SK-N-SH (cell line): ENCODE measurements at regions of chr19 and their contacts with region 1.

Region 1: GRCh38 chr19:21474671-21475181 is 30.7 kb upstream of the ZNF429 start:
- DNase-seq: peak; percentile 90
- H3K4me3 ChIP-seq: peak overlapping the region; percentile 41; a peak in 3 of 4 replicates
- H3K27ac ChIP-seq: no peak overlapping the region
- H3K4me1 ChIP-seq: no peaks in the 10 kb centered on the region
- H3K27me3 ChIP-seq: no peaks in the 10 kb centered on the region
- CTCF ChIP-seq: no peak
- EP300 ChIP-seq: no peak
- RAD21 ChIP-seq: no peak

Region 2: DNA sequence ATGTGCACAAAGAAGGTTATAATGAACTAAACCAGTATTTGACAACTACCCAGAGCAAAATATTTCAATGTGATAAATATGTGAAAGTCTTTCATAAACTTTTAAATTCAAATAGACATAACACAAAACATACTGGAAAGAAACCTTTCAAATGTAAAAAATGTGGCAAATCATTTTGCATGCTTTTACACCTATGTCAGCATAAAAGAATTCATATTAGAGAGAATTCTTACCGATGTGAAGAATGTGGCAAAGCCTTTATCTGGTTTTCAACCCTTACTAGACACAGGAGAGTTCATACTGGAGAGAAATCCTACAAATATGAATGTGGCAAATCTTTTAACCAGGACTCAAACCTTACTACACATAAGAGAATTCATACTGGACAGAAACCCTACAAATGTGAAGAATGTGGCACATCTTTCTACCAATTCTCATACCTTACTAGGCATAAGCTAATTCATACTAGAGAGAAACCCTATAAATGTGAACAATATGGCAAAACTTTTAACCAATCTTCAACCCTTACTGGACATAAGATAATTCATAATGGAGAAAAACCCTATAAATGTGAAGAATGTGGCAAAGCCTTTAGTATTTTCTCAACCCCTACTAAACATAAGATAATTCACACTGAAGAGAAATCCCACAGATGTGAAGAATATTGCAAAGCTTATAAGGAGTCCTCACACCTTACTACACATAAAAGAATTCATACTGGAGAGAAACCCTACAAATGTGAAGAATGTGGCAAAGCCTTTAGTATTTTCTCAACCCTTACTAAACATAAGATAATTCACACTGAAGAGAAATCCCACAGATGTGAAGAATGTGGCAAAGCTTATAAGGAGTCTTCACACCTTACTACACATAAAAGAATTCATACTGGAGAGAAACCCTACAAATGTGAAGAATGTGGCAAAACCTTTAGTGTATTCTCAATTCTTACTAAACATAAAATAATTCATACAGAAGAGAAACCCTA is 51.4 kb before region 1 on chr19:
- CTCF ChIA-PET with region 1: no interaction called
- POLR2A ChIA-PET with region 1: no interaction called
- DNase-seq: no peak
- H3K4me3 ChIP-seq: no peak overlapping the region
- H3K27ac ChIP-seq: no peak overlapping the region
- H3K4me1 ChIP-seq: no peaks in the 10 kb centered on the region
- H3K27me3 ChIP-seq: no peaks in the 10 kb centered on the region
- CTCF ChIP-seq: no peak
- EP300 ChIP-seq: no peak
- RAD21 ChIP-seq: no peak

Region 3: DNA sequence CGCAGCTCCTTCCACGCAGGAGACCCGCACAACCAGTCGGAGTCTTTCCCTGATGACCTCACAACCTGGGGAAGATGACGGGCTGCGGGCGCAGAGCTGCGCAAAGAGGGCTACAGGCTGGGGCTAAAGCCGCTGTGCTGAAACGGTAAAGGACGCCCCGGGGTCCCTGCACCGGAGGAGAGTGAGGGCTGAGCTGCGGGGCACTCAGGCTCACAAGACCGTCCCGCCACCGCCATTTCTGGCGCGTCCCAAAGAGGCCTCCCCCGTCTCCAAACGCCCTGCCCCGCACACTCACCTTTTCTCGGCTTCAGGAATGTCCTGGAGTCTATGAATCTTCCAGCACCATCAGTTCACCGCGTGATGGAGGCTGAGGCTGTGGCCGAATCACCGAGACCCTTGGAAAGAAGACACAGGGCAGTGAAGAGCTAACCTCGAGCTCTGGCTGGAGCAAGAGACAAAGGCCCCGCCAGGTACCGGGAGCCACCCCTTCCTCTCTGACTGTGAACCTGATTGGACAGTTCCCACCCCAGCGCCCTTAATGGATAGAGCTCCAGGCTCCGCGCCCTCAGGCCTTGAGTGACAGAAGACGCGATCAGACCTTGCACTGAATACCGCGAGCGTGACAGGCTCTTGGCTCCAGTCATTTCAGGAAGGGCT is 11.1 kb before region 1 on chr19:
- CTCF ChIA-PET with region 1: interaction called, 4 read pairs
- POLR2A ChIA-PET with region 1: interaction called, 12 read pairs
- DNase-seq: peak; percentile 87
- H3K4me3 ChIP-seq: peak overlapping the region in 1 of 2 experiments; percentile 48; a peak in 3 of 4 replicates
- H3K27ac ChIP-seq: peak overlapping the region in 1 of 2 experiments; percentile 20; a peak in 1 of 4 replicates
- H3K4me1 ChIP-seq: no peaks in the 10 kb centered on the region; a peak in 1 of 4 replicates
- H3K27me3 ChIP-seq: no peaks in the 10 kb centered on the region
- CTCF ChIP-seq: no peak
- EP300 ChIP-seq: no peak
- RAD21 ChIP-seq: no peak